PC-3 (cell line): ENCODE measurements at regions of chr7 and their contacts with region 1.

Region 1: DNA sequence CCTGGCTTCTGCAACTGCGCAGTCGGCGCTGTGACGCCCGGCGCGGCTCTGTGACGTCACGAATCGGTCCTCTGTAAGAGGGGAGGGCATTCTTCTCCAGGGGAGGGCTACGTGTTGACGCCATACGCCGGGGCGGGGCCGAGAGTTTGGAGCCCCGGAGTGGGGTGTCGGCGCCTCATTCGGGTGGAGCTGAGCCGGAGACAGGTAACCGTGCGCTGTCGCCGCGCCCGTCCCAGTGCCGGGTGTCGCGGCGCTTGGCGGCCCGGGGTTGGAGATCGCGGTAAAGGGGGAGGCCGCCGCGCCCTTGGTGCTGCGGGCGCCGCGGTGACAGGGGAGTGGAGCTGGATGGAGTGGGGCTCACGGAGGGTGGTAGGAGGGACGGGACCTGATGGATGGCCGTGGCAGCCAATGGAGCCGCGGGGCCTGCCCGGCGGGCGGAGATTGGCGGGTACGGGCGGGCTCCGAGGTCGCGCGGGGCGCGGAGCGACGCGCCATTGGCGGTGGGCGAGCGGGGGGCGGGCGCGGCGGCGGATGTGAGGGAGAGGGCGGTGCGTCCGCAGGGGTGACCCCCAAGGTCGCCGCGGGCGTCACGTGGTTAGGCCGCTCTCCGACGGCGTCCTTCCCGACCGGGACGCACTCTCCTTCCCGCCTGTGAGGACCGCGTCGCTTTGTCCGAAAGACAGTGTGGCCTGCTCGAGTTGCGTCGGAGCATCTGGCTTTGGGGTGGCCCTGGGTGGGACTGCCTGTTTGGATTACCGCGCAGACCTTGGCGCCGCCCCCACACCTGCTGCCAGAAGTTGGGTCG is at the start of gene OGDH:
- DNase-seq: peak; percentile 98
- ATAC-seq: peak; percentile 97
- H3K4me3 ChIP-seq: peak within 1 kb of the TSS; percentile 81
- H3K27ac ChIP-seq: peak within 1 kb of the TSS; percentile 82
- H3K4me1 ChIP-seq: peaks cover 23% of the 10 kb centered on the region
- H3K27me3 ChIP-seq: no peaks in the 10 kb centered on the region
- CTCF ChIP-seq: no peak
- total RNA-seq, gene OGDH: 66.2 and 67.2 TPM in 2 replicates

Region 2: GRCh38 chr7:44065436-44066118 is 541.1 kb before region 1 on chr7 and contains the start of gene PGAM2:
- CTCF ChIA-PET with region 1: no interaction called
- POLR2A ChIA-PET with region 1: interaction called, 13 read pairs
- intact Hi-C with region 1: no loop called
- DNase-seq: no peak
- ATAC-seq: peak; percentile 39
- H3K4me3 ChIP-seq: no peak within 1 kb of the TSS
- H3K27ac ChIP-seq: no peak within 1 kb of the TSS
- H3K4me1 ChIP-seq: no peaks in the 10 kb centered on the region; the same call in 1 of the 2 replicates
- H3K27me3 ChIP-seq: no peaks in the 10 kb centered on the region
- CTCF ChIP-seq: no peak
- total RNA-seq, gene PGAM2: 0.35 and 0.95 TPM in 2 replicates

Region 3: GRCh38 chr7:44547536-44548231 is 59.0 kb before region 1 on chr7:
- CTCF ChIA-PET with region 1: no interaction called
- POLR2A ChIA-PET with region 1: no interaction called
- intact Hi-C with region 1: no loop called
- DNase-seq: peak; percentile 35
- ATAC-seq: peak; percentile 23
- H3K4me3 ChIP-seq: peak overlapping the region; percentile 30; the same call in 1 of the 2 replicates
- H3K27ac ChIP-seq: no peak overlapping the region
- H3K4me1 ChIP-seq: peaks cover 28% of the 10 kb centered on the region
- H3K27me3 ChIP-seq: no peaks in the 10 kb centered on the region
- CTCF ChIP-seq: no peak

Region 4: DNA sequence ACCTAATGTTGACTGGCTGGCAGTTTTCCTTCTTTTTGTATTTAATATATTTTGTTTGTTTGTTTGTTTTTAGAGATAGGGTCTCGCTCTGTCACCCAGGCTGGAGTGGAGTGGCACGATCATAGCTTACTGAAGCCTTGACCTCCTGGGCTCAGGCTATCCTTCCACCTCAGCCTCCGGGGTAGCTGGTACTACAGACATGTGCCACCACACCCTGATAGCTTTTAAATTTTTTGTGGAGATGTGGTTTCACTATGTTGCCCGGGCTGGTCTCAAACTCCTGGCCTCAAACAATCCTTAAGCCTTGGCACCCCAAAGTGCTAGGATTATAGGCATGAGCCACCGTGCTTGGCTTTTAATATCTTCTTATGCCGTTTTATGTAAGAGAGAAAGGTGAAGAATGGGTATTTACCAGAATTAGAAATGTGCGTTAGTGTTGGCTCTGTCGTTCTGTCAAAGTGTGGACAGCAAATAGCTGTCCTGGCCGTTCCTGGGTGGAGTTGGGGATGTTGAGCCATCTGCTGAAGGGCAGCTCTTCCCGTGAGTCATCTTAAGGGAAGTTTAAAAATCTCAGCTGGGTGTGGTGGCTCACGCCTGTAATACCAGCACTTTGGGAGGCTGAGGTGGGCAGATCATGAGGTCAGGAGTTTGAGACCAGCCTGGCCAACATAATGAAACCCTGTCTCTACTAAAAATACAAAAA is 14.5 kb after region 1 on chr7:
- CTCF ChIA-PET with region 1: no interaction called
- POLR2A ChIA-PET with region 1: interaction called, 15 read pairs
- intact Hi-C with region 1: no loop called
- DNase-seq: peak; percentile 53
- ATAC-seq: peak; percentile 70
- H3K4me3 ChIP-seq: no peak overlapping the region
- H3K27ac ChIP-seq: peak overlapping the region; percentile 44
- H3K4me1 ChIP-seq: peaks cover 39% of the 10 kb centered on the region
- H3K27me3 ChIP-seq: no peaks in the 10 kb centered on the region
- CTCF ChIP-seq: no peak

Region 5: DNA sequence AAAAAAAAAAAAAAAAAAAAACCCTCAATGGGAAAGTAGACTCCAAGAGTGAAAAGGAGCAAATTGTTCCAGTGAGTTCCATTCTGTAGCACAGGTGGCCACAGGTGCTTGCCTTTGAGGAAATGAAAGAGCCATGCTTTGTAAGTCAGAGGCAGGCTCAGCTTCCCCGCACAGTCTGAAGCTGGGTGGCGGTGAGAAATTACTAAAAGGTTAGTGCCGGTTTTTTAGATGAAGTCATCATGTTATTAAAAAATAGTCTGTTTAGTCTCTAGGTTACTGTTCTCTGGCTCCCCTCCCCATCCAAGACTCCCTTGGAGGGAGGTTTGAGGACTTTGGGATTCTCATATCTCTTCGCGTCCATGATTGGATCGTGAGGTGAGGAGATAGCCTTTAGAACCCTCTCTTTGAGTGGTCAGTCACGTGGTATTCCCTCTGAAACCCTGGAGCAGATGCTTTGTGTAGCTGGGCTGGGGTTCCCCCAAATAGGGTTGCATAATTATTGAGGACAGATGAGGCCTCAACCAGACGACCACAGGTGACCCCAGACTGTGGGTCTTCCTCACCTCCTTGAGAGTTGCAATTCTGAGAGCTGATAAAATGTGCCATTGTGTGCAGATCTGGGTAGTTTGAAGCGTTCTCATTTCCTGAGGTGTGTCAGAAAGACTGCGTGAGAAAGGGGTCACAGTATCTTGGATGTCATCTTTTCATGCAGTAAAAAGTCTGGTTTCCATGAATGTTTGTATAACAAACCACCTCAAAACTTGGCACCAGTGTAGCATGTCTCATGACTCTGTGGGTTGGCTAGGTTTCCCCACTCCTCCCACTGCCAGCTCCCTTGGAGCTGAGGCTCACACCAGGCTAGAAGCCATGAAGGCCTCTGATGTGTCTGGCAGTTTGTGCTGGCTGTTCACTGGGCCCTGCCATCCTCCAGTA is 26.9 kb after region 1 on chr7:
- CTCF ChIA-PET with region 1: no interaction called
- POLR2A ChIA-PET with region 1: interaction called, 9 read pairs
- intact Hi-C with region 1: loop called (anchors 1 kb)
- DNase-seq: peak; percentile 96
- ATAC-seq: peak; percentile 75
- H3K4me3 ChIP-seq: no peak overlapping the region
- H3K27ac ChIP-seq: peak overlapping the region; percentile 98
- H3K4me1 ChIP-seq: peaks cover 58% of the 10 kb centered on the region
- H3K27me3 ChIP-seq: no peaks in the 10 kb centered on the region
- CTCF ChIP-seq: no peak

Region 6: DNA sequence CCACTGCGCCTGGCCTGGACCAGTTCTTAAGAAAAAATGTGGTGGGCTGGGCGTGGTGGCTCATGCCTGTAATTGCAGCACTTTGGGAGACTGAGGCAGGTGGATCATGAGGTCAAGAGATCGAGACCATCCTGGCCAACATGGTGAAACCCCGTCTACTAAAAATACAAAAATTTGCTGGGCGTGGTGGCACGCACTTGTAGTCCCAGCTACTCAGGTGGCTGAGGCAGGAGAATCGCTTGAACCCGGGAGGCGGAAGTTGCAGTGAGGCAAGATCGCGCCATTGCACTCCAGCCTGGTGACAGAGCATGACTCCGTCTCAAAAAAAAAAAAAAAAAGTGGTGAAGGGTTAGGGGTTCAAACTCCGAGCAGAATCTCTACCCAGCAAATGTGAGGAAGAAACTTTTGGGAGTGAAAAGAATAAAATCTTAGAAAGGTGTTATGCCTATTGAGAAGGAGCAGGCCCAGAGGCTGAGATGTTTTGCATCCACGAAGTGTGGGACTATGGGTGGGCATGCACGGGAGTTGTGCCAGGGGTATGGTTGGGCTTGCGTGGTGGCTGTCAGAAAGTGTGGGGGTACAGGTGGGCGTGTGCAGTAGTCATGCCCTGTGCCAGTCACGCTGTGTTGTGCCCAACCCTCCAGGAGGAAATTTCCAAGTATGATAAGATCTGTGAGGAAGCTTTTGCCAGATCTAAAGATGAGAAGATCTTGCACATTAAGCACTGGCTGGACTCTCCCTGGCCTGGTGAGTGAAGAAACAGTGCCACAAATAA is 88.9 kb after region 1 on chr7:
- CTCF ChIA-PET with region 1: no interaction called
- POLR2A ChIA-PET with region 1: no interaction called
- intact Hi-C with region 1: no loop called
- DNase-seq: no peak
- ATAC-seq: no peak
- H3K4me3 ChIP-seq: no peak overlapping the region
- H3K27ac ChIP-seq: no peak overlapping the region
- H3K4me1 ChIP-seq: no peaks in the 10 kb centered on the region
- H3K27me3 ChIP-seq: no peaks in the 10 kb centered on the region
- CTCF ChIP-seq: no peak